ENCODE measurements at regions of chr11 and their contacts with region 1.

Region 1: GRCh38 chr11:65506770-65507505 is 8.1 kb downstream of the MALAT1 start:
- DNase-seq: peak; percentile 48 to 59
- ATAC-seq: peak; percentile 23 to 43 (median 25)
- H3K4me3 ChIP-seq: no peak overlapping the region
- H3K4me3 Mint-ChIP-seq: no peak overlapping the region
- H3K27ac ChIP-seq: peak overlapping the region; percentile 69
- H3K27ac Mint-ChIP-seq: no peak overlapping the region
- H3K4me1 ChIP-seq: peaks cover 47% of the 10 kb centered on the region
- H3K4me1 Mint-ChIP-seq: peaks cover 49 to 59% of the 10 kb centered on the region in 2 donors
- H3K27me3 ChIP-seq: no peaks in the 10 kb centered on the region
- H3K27me3 Mint-ChIP-seq: no peaks in the 10 kb centered on the region
- CTCF ChIP-seq: no peak

Region 2: GRCh38 chr11:65187971-65188461 is 318.9 kb before region 1 on chr11:
- intact Hi-C with region 1: no loop called
- DNase-seq: no peak
- ATAC-seq: no peak
- H3K4me3 ChIP-seq: no peak overlapping the region
- H3K4me3 Mint-ChIP-seq: no peak overlapping the region
- H3K27ac ChIP-seq: no peak overlapping the region
- H3K27ac Mint-ChIP-seq: no peak overlapping the region
- H3K4me1 ChIP-seq: peaks cover 5% of the 10 kb centered on the region
- H3K4me1 Mint-ChIP-seq: peaks cover 9 to 40% of the 10 kb centered on the region in 2 donors
- H3K27me3 ChIP-seq: no peaks in the 10 kb centered on the region
- H3K27me3 Mint-ChIP-seq: no peaks in the 10 kb centered on the region
- CTCF ChIP-seq: no peak

Region 3: GRCh38 chr11:65213322-65214211 is 293.4 kb before region 1 on chr11:
- intact Hi-C with region 1: loop called (anchors 10 kb)
- DNase-seq: peak; percentile 33 to 46
- ATAC-seq: peak; percentile 65 to 89 (median 78)
- H3K4me3 ChIP-seq: peak overlapping the region; percentile 9
- H3K4me3 Mint-ChIP-seq: peak overlapping the region; percentile 78
- H3K27ac ChIP-seq: no peak overlapping the region
- H3K27ac Mint-ChIP-seq: peak overlapping the region in 1 of 2 donors; percentile 31
- H3K4me1 ChIP-seq: peaks cover 37% of the 10 kb centered on the region
- H3K4me1 Mint-ChIP-seq: peaks cover 26 to 46% of the 10 kb centered on the region in 2 donors
- H3K27me3 ChIP-seq: no peaks in the 10 kb centered on the region
- H3K27me3 Mint-ChIP-seq: peaks cover 0 to 5% of the 10 kb centered on the region in 2 donors
- CTCF ChIP-seq: no peak

Region 4: GRCh38 chr11:65366340-65366773 is 140.6 kb before region 1 on chr11:
- intact Hi-C with region 1: loop called (anchors 1 kb)
- DNase-seq: peak in 1 of 2 donors; percentile 80
- ATAC-seq: peak; percentile 76 to 81 (median 81)
- H3K4me3 ChIP-seq: no peak overlapping the region
- H3K4me3 Mint-ChIP-seq: no peak overlapping the region
- H3K27ac ChIP-seq: no peak overlapping the region
- H3K27ac Mint-ChIP-seq: no peak overlapping the region
- H3K4me1 ChIP-seq: peaks cover 15% of the 10 kb centered on the region
- H3K4me1 Mint-ChIP-seq: peaks cover 5 to 13% of the 10 kb centered on the region in 2 donors
- H3K27me3 ChIP-seq: no peaks in the 10 kb centered on the region
- H3K27me3 Mint-ChIP-seq: no peaks in the 10 kb centered on the region
- CTCF ChIP-seq: peak; percentile 70

Region 5: GRCh38 chr11:65382033-65382807 is 124.7 kb before region 1 on chr11 and contains the start of gene SLC25A45:
- intact Hi-C with region 1: loop called (anchors 1 kb)
- DNase-seq: peak; percentile 90 to 94
- ATAC-seq: peak; percentile 75 to 89 (median 79)
- H3K4me3 ChIP-seq: peak within 1 kb of the TSS; percentile 51
- H3K4me3 Mint-ChIP-seq: peak within 1 kb of the TSS; percentile 89
- H3K27ac ChIP-seq: peak within 1 kb of the TSS; percentile 92
- H3K27ac Mint-ChIP-seq: peak within 1 kb of the TSS; percentile 99
- H3K4me1 ChIP-seq: peaks cover 81% of the 10 kb centered on the region
- H3K4me1 Mint-ChIP-seq: peaks cover 39 to 56% of the 10 kb centered on the region in 2 donors
- H3K27me3 ChIP-seq: no peaks in the 10 kb centered on the region
- H3K27me3 Mint-ChIP-seq: no peaks in the 10 kb centered on the region
- CTCF ChIP-seq: peak; percentile 83
- total RNA-seq, gene SLC25A45: 50.9 to 61.1 (median 61.0) TPM

Region 6: DNA sequence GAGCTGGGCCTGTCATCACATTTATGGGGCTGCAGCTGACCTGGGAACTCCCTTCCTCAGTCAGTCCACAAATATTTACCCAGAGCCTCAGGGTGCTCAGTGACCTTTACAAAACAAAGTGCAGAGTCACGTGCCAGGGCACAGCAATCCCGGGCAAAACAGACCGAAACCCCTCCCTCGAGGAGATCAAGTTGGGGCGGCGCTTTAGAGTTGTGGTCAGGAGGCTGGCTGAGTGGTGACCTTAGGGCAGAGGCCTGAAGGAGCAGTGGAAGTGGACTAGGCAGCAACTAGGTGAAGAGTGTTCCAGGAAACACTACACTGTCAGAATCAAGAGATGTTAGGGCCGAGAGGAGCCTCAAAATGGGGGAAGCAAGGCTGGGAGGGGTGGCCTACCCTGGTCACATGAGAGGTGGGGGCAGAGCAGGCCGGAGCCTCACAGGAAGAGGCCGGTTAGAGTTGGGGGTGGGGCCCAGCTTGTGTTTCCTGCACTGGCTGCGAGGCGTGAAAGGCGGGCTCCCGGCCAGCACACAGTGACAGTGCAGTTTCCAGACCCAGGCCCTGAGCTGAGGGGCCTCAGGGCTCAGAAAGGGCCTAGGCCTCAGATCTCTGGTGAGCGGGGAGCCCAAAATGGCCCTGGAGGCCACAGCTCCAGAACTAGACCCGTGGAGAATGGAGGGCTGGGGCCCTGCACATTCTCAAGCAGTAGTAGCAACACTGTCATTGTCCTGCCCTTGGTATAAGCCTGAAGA is 88.1 kb before region 1 on chr11:
- intact Hi-C with region 1: loop called (anchors 1 kb)
- DNase-seq: peak; percentile 84 to 89
- ATAC-seq: peak; percentile 49 to 77 (median 61)
- H3K4me3 ChIP-seq: peak overlapping the region; percentile 39
- H3K4me3 Mint-ChIP-seq: peak overlapping the region; percentile 88
- H3K27ac ChIP-seq: peak overlapping the region; percentile 100
- H3K27ac Mint-ChIP-seq: peak overlapping the region; percentile 98 to 100
- H3K4me1 ChIP-seq: peaks cover 69% of the 10 kb centered on the region
- H3K4me1 Mint-ChIP-seq: peaks cover 69 to 79% of the 10 kb centered on the region in 2 donors
- H3K27me3 ChIP-seq: no peaks in the 10 kb centered on the region
- H3K27me3 Mint-ChIP-seq: peaks cover 0 to 5% of the 10 kb centered on the region in 2 donors
- CTCF ChIP-seq: no peak

Region 7: GRCh38 chr11:65471410-65471762 is 35.6 kb before region 1 on chr11:
- intact Hi-C with region 1: loop called (anchors 5 kb)
- DNase-seq: peak in 1 of 2 donors; percentile 46
- ATAC-seq: peak in 1 of 3 donors; percentile 29
- H3K4me3 ChIP-seq: no peak overlapping the region
- H3K4me3 Mint-ChIP-seq: no peak overlapping the region
- H3K27ac ChIP-seq: peak overlapping the region; percentile 60
- H3K27ac Mint-ChIP-seq: peak overlapping the region; percentile 79 to 96
- H3K4me1 ChIP-seq: peaks cover 19% of the 10 kb centered on the region
- H3K4me1 Mint-ChIP-seq: peaks cover 14 to 15% of the 10 kb centered on the region in 2 donors
- H3K27me3 ChIP-seq: no peaks in the 10 kb centered on the region
- H3K27me3 Mint-ChIP-seq: no peaks in the 10 kb centered on the region
- CTCF ChIP-seq: no peak

Measured in natural killer cell (primary cell).